ENCODE measurements at regions of chr17 and their contacts with region 1.

Region 1: DNA sequence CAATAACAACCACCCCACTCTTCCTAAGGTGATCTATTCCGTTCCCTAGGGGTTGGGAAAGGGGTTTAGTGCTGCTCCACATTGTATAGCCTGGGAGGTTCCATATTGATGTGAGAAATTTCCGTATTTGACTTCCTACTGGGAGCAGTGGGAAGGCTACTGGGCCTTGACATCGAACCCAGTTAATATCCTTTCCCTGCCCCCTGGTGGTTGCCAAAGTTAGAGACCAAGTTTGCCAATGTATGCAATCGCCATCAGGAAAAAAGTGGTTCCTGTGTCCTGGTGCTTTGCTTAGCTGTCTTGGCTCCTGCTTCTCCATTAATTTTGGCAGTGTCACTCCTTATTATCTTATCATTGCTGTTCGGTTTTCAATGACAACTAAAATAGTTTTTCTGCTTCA is 914.9 kb downstream of the KCNJ2 start:
- DNase-seq: peak; percentile 67
- H3K4me3 Mint-ChIP-seq: no peak overlapping the region
- H3K27ac Mint-ChIP-seq: no peak overlapping the region
- H3K4me1 Mint-ChIP-seq: no peaks in the 10 kb centered on the region
- H3K27me3 Mint-ChIP-seq: no peaks in the 10 kb centered on the region
- CTCF ChIP-seq: no peak

Region 2: GRCh38 chr17:70636517-70637133 is 447.6 kb before region 1 on chr17:
- CTCF ChIA-PET with region 1: no interaction called
- intact Hi-C with region 1: loop called (anchors 1 kb)
- DNase-seq: peak; percentile 25
- H3K4me3 Mint-ChIP-seq: no peak overlapping the region
- H3K27ac Mint-ChIP-seq: no peak overlapping the region
- H3K4me1 Mint-ChIP-seq: no peaks in the 10 kb centered on the region
- H3K27me3 Mint-ChIP-seq: peaks cover 20% of the 10 kb centered on the region
- CTCF ChIP-seq: peak; percentile 59

Region 3: GRCh38 chr17:71237903-71238538 is 153.8 kb after region 1 on chr17:
- CTCF ChIA-PET with region 1: no interaction called
- intact Hi-C with region 1: no loop called
- DNase-seq: no peak
- H3K4me3 Mint-ChIP-seq: no peak overlapping the region
- H3K27ac Mint-ChIP-seq: no peak overlapping the region
- H3K4me1 Mint-ChIP-seq: peaks cover 10% of the 10 kb centered on the region
- H3K27me3 Mint-ChIP-seq: no peaks in the 10 kb centered on the region
- CTCF ChIP-seq: no peak